ENCODE measurements at regions of chr20 and their contacts with region 1.

Region 1: DNA sequence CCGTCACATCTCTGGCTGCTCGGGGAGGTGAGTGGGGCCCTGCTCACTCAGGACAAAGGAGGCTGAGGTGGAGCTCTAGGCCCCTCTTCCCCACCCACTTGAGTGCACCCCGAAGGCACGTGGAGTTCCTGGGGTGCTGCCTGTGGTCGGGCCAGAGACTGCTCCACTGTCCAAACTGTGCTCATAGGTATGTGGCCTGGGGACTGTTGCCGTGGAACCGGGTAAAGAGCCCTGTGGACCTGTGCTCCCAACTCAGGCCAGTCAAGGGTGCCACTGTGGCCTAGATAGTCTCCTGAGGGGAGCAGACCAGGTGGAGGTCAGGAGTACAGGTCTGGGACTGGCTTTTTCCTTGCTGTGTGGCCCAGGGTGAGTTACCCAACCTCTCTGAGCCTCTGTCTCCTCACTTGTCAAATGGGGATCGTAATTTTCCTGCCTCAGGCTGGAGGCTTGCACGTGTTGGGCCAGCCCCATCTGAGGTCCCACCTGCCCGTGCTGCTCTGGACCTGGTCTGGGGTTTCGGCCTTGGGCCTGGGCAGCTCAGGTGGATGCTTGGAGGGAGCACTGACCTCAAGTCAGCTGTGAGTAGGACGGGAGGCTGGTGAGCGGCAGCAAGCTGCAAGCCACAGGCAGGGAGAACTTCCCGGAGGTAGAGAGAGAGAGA is 12.4 kb upstream of the NPBWR2 start:
- DNase-seq: no peak
- ATAC-seq: peak; percentile 16 to 39; a peak in 4 of 6 replicates
- H3K4me3 ChIP-seq: no peak overlapping the region
- H3K27ac ChIP-seq: no peak overlapping the region
- H3K4me1 ChIP-seq: no peaks in the 10 kb centered on the region
- CTCF ChIP-seq: no peak
- EP300 ChIP-seq: no peak
- POLR2A ChIP-seq: no peak
- RAD21 ChIP-seq: no peak

Region 2: GRCh38 chr20:64069614-64070243 is 50.1 kb before region 1 on chr20:
- CTCF ChIA-PET with region 1: interaction called, 10 read pairs
- POLR2A ChIA-PET with region 1: no interaction called
- DNase-seq: peak in 1 of 2 experiments; percentile 87
- ATAC-seq: peak; percentile 60 to 79
- H3K4me3 ChIP-seq: no peak overlapping the region
- H3K27ac ChIP-seq: no peak overlapping the region
- H3K4me1 ChIP-seq: peaks cover 25% of the 10 kb centered on the region
- CTCF ChIP-seq: peak; percentile 68
- EP300 ChIP-seq: no peak
- POLR2A ChIP-seq: no peak
- RAD21 ChIP-seq: peak; percentile 31 to 40; a peak in 2 of 5 replicates

Region 3: DNA sequence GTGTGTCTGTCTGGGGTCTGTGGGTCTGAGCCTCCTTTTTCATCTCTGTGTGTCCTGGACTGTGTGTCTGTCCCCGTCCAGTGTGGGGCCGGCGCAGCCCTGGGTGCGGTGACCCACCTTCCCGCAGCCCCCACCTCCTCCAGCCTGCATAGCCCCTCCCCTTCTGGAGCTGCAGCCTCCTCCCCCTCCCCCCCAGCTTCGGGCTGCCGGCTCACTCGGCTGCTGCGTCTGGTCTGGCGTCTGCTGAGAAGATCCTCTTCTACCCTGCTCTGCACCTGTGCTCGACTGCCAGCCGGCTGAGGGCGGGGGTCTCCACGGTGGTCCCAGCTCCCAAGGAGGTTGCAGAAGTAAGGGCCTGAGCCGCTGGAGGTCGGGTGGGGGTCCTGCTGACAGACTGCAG is 28.0 kb before region 1 on chr20:
- CTCF ChIA-PET with region 1: interaction called, 121 read pairs
- POLR2A ChIA-PET with region 1: no interaction called
- DNase-seq: no peak
- ATAC-seq: peak in 1 of 2 experiments; percentile 39; a peak in 3 of 6 replicates
- H3K4me3 ChIP-seq: no peak overlapping the region
- H3K27ac ChIP-seq: no peak overlapping the region
- H3K4me1 ChIP-seq: no peaks in the 10 kb centered on the region
- CTCF ChIP-seq: no peak
- EP300 ChIP-seq: no peak
- POLR2A ChIP-seq: no peak
- RAD21 ChIP-seq: no peak

Region 4: GRCh38 chr20:64106981-64107735 is 12.7 kb before region 1 on chr20 and contains the start of gene NPBWR2:
- CTCF ChIA-PET with region 1: interaction called, 63 read pairs
- POLR2A ChIA-PET with region 1: no interaction called
- DNase-seq: no peak
- ATAC-seq: peak; percentile 7 to 28; a peak in 3 of 6 replicates
- H3K4me3 ChIP-seq: no peak within 1 kb of the TSS
- H3K27ac ChIP-seq: no peak within 1 kb of the TSS
- H3K4me1 ChIP-seq: 0 out of 3 replicates have a peak, but pooled peaks cover 3% of the 10 kb centered on the region
- CTCF ChIP-seq: no peak
- EP300 ChIP-seq: no peak
- POLR2A ChIP-seq: no peak
- RAD21 ChIP-seq: no peak
- polyA plus RNA-seq, gene NPBWR2: not detected in 2 replicates

Region 5: DNA sequence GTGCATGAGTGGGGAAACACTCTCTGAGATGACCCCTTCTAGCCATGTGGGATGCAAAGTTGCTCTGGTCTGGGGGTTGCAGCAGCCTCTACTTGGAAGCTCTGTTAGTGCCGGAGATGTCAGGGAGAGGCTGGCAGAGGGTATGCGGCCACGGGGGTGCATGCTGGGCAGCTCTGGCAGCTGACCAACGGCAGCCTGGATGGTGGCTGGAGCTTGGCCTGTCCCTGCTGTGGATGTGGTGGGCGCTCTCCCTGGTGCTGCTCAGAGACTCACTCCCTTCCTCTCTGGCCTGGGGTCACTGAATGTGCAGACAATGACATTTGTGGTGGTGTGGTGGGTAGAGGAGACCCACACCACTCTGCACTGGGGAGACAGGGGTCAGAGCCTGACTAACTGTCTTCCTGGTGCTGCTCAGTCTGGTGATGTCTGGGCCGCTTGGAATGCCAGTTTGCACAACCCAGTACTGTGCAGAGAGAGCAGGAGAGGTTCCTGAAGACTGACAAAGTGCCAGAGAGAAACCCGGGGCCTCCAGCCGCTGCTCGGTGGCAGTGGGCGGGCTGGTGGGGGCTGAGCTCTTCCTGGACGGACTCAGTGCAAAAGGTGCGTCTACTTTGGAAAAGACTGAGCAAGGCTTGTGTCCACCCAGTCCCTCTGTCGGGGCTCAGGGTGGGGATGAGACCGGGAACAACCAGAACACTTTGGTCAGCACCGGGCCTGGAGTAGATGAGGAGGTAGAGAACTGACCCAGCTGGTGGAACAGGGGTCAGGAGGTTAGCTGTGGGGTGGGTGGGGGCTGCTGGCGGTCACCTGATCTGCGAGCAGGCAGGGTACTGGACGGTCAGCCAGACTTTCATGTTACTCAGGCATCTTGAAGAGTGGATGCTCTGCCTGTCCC is 47.2 kb after region 1 on chr20:
- CTCF ChIA-PET with region 1: no interaction called
- POLR2A ChIA-PET with region 1: no interaction called
- DNase-seq: no peak
- ATAC-seq: peak in 1 of 2 experiments; percentile 33; a peak in 3 of 6 replicates
- H3K4me3 ChIP-seq: no peak overlapping the region
- H3K27ac ChIP-seq: no peak overlapping the region
- H3K4me1 ChIP-seq: no peaks in the 10 kb centered on the region
- CTCF ChIP-seq: no peak
- EP300 ChIP-seq: no peak
- POLR2A ChIP-seq: no peak
- RAD21 ChIP-seq: no peak

Measured in A549 (cell line).